ENCODE measurements at regions of chr11 and their contacts with region 1.

Region 1: GRCh38 chr11:32968541-32968940 is 47.1 kb upstream of the DEPDC7 start:
- DNase-seq: no peak
- ATAC-seq: no peak
- H3K4me3 ChIP-seq: no peak overlapping the region
- H3K4me3 Mint-ChIP-seq: no peak overlapping the region
- H3K27ac ChIP-seq: no peak overlapping the region
- H3K27ac Mint-ChIP-seq: no peak overlapping the region
- H3K4me1 ChIP-seq: no peaks in the 10 kb centered on the region
- H3K4me1 Mint-ChIP-seq: no peaks in the 10 kb centered on the region
- H3K27me3 ChIP-seq: no peaks in the 10 kb centered on the region
- H3K27me3 Mint-ChIP-seq: no peaks in the 10 kb centered on the region

Region 2: DNA sequence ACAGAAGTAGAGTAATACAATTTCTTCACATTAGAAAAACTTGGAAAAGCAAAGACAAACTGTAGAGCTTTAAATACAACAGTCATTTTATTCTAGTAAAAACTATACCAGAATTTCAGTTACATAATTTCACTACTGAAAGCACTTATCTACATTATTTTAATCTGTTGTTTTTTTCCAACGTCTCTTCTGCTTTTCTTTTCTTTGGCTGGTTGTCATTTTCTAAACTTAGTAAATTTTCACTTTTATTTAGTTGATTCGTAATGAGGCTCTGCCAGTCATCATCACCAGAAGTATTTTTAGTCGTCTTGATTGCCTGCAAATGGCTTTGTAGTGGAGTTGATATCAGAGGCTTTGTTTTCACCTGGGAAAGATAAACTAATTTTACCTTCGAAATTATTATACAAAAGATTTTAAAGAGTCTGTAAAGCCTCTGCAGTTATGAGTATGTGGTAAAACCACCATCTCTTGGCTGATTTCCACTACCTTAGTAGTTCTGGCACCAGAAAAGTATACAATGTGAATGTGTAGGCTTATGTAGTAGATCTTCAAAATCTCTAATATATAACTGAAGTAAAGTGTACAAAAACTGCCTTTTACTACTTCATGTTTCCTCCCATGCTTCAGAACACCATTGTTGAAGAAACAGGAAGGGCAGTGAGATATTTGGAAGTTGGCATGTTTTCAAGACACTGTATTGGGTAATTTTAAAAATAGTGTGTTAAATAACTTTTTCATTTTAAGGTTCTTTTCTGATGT is 365.7 kb before region 1 on chr11:
- CTCF ChIA-PET with region 1: no interaction called
- POLR2A ChIA-PET with region 1: interaction called in 1 of 2 experiments, 15 read pairs
- DNase-seq: no peak
- ATAC-seq: no peak
- H3K4me3 ChIP-seq: no peak overlapping the region
- H3K4me3 Mint-ChIP-seq: no peak overlapping the region
- H3K27ac ChIP-seq: no peak overlapping the region
- H3K27ac Mint-ChIP-seq: peak overlapping the region; percentile 8 to 46
- H3K4me1 ChIP-seq: no peaks in the 10 kb centered on the region
- H3K4me1 Mint-ChIP-seq: peaks cover 0 to 3% (median 2%) of the 10 kb centered on the region in 3 donors
- H3K27me3 ChIP-seq: no peaks in the 10 kb centered on the region
- H3K27me3 Mint-ChIP-seq: no peaks in the 10 kb centered on the region

Measured in T-cell (primary cell).